MCF 10A (cell line): ENCODE measurements at regions of chr3 and their contacts with region 1.

Region 1: DNA sequence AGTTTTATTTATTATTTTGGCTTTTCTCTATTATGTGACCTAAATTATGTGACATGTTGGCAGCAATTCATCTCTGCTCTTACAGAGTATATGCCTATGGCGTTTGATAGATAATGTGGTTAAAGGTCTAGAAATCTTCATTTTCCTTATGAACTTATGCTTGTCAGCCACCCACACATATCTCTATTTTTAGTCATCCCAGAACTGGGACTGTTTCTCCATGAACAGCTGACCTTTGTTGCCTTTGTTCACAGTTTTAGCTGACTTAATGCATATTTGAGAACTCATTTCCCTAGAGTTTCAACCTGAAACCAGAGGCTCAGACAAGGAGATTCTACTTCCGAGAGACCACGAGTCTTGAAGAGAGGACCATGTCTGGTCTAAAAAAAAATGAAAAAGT is 176.5 kb downstream of the RAP2B start:
- DNase-seq: peak; percentile 3
- H3K4me3 Mint-ChIP-seq: no peak overlapping the region
- H3K27ac Mint-ChIP-seq: no peak overlapping the region
- H3K4me1 Mint-ChIP-seq: no peaks in the 10 kb centered on the region
- H3K27me3 Mint-ChIP-seq: no peaks in the 10 kb centered on the region
- CTCF ChIP-seq: no peak

Region 2: GRCh38 chr3:153484842-153485241 is 146.4 kb after region 1 on chr3:
- CTCF ChIA-PET with region 1: no interaction called
- POLR2A ChIA-PET with region 1: no interaction called
- intact Hi-C with region 1: loop called (anchors 5 kb)
- DNase-seq: no peak
- H3K4me3 Mint-ChIP-seq: no peak overlapping the region
- H3K27ac Mint-ChIP-seq: no peak overlapping the region
- H3K4me1 Mint-ChIP-seq: no peaks in the 10 kb centered on the region
- H3K27me3 Mint-ChIP-seq: no peaks in the 10 kb centered on the region
- CTCF ChIP-seq: no peak